Mammary epithelial cell (primary cell): ENCODE measurements at regions of chr18 and their contacts with region 1.

Region 1: DNA sequence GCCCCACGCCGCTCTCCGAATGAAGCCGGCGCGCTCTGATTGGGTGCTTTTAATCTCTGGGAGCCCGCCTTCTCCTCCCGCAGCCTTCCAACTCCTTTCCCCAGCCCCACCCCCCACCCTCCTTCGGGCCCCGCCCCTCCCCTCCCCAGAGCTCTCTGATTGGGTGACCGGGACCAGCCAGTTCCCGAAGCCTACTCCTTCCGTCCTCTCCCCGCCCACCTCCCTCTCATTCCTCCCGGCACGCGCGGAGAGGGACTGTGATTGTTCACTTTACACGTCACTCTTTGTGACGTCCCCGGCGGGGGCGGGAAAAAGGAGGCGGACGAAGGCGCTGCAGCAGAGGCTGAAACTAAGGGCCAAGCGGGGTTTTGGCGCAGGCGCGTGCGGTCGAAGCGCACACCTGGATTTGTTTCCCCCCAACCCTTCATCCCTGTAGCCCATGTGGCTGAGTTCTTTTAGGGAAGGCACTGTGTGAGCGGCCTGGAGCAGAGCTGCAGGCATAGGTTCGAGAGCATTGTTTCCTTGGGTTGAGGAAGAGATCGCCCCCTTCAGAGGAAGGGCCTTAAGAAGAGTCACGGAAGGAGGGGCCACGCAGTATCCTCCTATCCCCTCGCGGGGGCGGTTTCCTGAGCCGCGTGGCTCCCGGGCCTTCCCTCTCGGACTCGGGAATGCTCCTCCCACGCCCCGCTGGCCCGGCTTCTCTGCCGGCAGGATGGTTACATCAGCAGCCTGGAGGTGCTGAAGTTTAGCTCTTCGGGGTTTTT is at the start of gene MEX3C:
- DNase-seq: peak; percentile 99
- H3K4me3 ChIP-seq: peak within 1 kb of the TSS; percentile 74 to 83 (median 76)
- H3K27ac ChIP-seq: peak within 1 kb of the TSS; percentile 98
- H3K4me1 ChIP-seq: peaks cover 10% of the 10 kb centered on the region
- H3K27me3 ChIP-seq: no peaks in the 10 kb centered on the region
- CTCF ChIP-seq: peak in 1 of 2 donors; percentile 41
- total RNA-seq, gene MEX3C: 79.1 to 102 TPM

Region 2: GRCh38 chr18:50866765-50867164 is 331.1 kb before region 1 on chr18:
- CTCF ChIA-PET with region 1: no interaction called
- dilution Hi-C with region 1: no loop called
- in situ Hi-C with region 1: no loop called
- intact Hi-C with region 1: loop called (anchors 5 kb)
- DNase-seq: no peak
- H3K4me3 ChIP-seq: no peak overlapping the region
- H3K27ac ChIP-seq: no peak overlapping the region
- H3K4me1 ChIP-seq: peaks cover 32% of the 10 kb centered on the region
- H3K27me3 ChIP-seq: no peaks in the 10 kb centered on the region
- CTCF ChIP-seq: peak; percentile 13 to 29

Region 3: DNA sequence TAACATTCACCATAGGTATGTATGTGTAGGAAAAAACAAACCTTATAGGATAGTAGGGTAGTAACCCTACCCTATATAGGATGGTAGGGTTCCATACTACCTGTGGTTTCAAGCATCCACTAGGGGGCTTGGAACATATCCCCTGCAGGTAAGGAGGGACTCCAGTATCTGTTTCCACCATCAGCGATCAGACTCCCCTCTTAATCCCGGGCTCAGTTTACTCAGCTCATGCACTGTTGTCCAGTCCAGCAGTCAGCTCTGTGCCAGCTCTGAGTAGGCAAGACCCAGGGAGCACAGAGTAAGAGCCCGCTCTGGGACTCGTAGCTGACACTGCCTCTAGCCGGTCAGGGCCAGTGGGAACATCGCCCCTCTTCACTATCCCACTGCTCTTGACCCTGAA is 62.0 kb before region 1 on chr18:
- CTCF ChIA-PET with region 1: no interaction called
- dilution Hi-C with region 1: no loop called
- in situ Hi-C with region 1: no loop called
- intact Hi-C with region 1: loop called (anchors 1 kb)
- DNase-seq: no peak
- H3K4me3 ChIP-seq: no peak overlapping the region
- H3K27ac ChIP-seq: peak overlapping the region; percentile 96
- H3K4me1 ChIP-seq: peaks cover 47% of the 10 kb centered on the region
- H3K27me3 ChIP-seq: no peaks in the 10 kb centered on the region
- CTCF ChIP-seq: peak; percentile 12 to 20

Region 4: GRCh38 chr18:51321336-51322095 is 123.7 kb after region 1 on chr18:
- CTCF ChIA-PET with region 1: no interaction called
- dilution Hi-C with region 1: no loop called
- in situ Hi-C with region 1: no loop called
- intact Hi-C with region 1: loop called (anchors 5 kb)
- DNase-seq: peak; percentile 85
- H3K4me3 ChIP-seq: no peak overlapping the region
- H3K27ac ChIP-seq: peak overlapping the region; percentile 43
- H3K4me1 ChIP-seq: peaks cover 22% of the 10 kb centered on the region
- H3K27me3 ChIP-seq: no peaks in the 10 kb centered on the region
- CTCF ChIP-seq: peak; percentile 22 to 24

Region 5: GRCh38 chr18:51522821-51523220 is 325.0 kb after region 1 on chr18:
- CTCF ChIA-PET with region 1: no interaction called
- dilution Hi-C with region 1: no loop called
- in situ Hi-C with region 1: no loop called
- intact Hi-C with region 1: no loop called
- DNase-seq: peak; percentile 87
- H3K4me3 ChIP-seq: no peak overlapping the region
- H3K27ac ChIP-seq: peak overlapping the region; percentile 76
- H3K4me1 ChIP-seq: peaks cover 80% of the 10 kb centered on the region
- H3K27me3 ChIP-seq: no peaks in the 10 kb centered on the region
- CTCF ChIP-seq: no peak

Region 6: DNA sequence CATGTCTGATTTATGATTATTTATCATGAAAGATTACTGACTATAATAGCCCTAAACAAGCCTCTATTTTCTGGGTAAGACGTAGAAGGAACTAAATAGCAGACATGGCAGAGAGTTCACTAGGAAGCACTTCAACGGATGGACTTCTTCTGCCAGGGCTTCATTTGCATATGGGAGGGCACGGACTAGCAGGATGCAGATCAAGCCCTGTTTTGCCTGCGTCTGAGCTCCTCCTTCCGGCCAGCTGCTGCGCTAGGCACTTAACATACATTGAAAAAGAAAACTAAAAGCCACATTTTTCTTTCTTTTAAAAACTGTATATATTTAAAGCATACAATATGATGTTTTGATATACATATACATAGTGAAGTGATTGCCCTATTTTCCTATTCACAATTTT is 339.6 kb after region 1 on chr18:
- CTCF ChIA-PET with region 1: no interaction called
- dilution Hi-C with region 1: no loop called
- in situ Hi-C with region 1: no loop called
- intact Hi-C with region 1: loop called (anchors 2 kb)
- DNase-seq: peak; percentile 66
- H3K4me3 ChIP-seq: no peak overlapping the region
- H3K27ac ChIP-seq: no peak overlapping the region
- H3K4me1 ChIP-seq: no peaks in the 10 kb centered on the region
- H3K27me3 ChIP-seq: no peaks in the 10 kb centered on the region
- CTCF ChIP-seq: peak; percentile 46 to 61

Region 7: GRCh38 chr18:52237551-52237950 is 1039.7 kb after region 1 on chr18:
- CTCF ChIA-PET with region 1: no interaction called
- dilution Hi-C with region 1: no loop called
- in situ Hi-C with region 1: no loop called
- intact Hi-C with region 1: loop called (anchors 10 kb)
- DNase-seq: peak; percentile 98
- H3K4me3 ChIP-seq: no peak overlapping the region
- H3K27ac ChIP-seq: peak overlapping the region; percentile 94
- H3K4me1 ChIP-seq: peaks cover 31% of the 10 kb centered on the region
- H3K27me3 ChIP-seq: no peaks in the 10 kb centered on the region
- CTCF ChIP-seq: no peak